Naive thymus-derived CD4-positive, alpha-beta T cell (primary cell): ENCODE measurements at regions of chr5 and their contacts with region 1.

Region 1: GRCh38 chr5:151213800-151214613 is 9.9 kb downstream of the CCDC69 start:
- DNase-seq: peak; percentile 53 to 85 (median 79)
- ATAC-seq: peak; percentile 90
- H3K4me3 ChIP-seq: peak overlapping the region; percentile 74
- H3K4me3 Mint-ChIP-seq: peak overlapping the region; percentile 80 to 93 (median 89)
- H3K27ac ChIP-seq: peak overlapping the region; percentile 93
- H3K27ac Mint-ChIP-seq: peak overlapping the region; percentile 90 to 98 (median 97)
- H3K4me1 ChIP-seq: peaks cover 80 to 82% of the 10 kb centered on the region in 2 donors
- H3K4me1 Mint-ChIP-seq: peaks cover 56 to 95% (median 84%) of the 10 kb centered on the region in 7 donors
- H3K27me3 ChIP-seq: no peaks in the 10 kb centered on the region
- H3K27me3 Mint-ChIP-seq: no peaks in the 10 kb centered on the region

Region 2: DNA sequence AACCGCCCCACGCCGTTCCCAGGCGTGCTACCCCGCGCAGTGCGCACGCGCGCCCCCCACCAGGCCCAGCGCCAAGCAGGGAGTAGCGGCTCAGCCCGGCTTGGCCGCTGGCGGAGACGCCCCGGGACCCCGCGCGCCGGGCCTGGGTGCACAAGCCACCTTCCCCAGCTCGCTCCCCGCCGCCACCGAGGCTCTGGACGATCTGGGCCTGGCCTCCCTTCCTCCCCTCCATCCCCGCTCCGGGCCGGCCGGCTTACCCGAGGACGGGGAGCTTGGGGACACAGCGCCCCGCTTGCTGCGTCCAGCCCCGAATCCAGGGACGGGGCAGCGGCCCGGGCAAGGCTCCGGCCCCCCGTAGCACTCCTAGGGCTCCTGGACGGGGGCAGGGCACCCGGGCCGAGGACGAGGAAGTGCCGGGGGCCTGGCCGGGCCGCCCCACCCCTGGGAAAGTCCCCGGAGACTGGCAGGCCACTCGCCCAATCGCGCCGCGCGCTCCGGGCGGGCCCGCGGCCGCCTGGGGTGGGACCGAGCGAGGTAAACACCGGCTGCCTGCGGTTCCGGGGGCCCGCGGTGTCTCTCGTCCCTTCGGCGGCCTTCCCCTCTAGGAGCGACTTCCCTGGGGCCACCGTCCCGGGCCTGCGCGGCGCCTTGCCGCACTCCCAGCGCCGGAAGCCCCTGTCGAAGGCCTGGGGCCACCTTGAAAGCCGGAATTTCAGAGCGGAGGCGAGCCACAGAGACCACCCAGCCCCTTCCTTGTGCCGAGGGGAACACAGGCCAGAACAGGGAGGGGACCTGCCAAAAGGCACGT is 133.2 kb before region 1 on chr5 and contains the start of gene TNIP1:
- CTCF ChIA-PET with region 1: no interaction called
- POLR2A ChIA-PET with region 1: interaction called, 5 read pairs
- intact Hi-C with region 1: loop called (anchors 2 kb)
- DNase-seq: peak; percentile 86 to 99 (median 90)
- ATAC-seq: peak; percentile 94
- H3K4me3 ChIP-seq: peak within 1 kb of the TSS; percentile 86
- H3K4me3 Mint-ChIP-seq: peak within 1 kb of the TSS; percentile 85 to 95 (median 90)
- H3K27ac ChIP-seq: peak within 1 kb of the TSS; percentile 96
- H3K27ac Mint-ChIP-seq: peak within 1 kb of the TSS; percentile 86 to 95 (median 91)
- H3K4me1 ChIP-seq: peaks cover 37 to 69% of the 10 kb centered on the region in 2 donors
- H3K4me1 Mint-ChIP-seq: peaks cover 53 to 84% (median 73%) of the 10 kb centered on the region in 7 donors
- H3K27me3 ChIP-seq: no peaks in the 10 kb centered on the region
- H3K27me3 Mint-ChIP-seq: no peaks in the 10 kb centered on the region
- total RNA-seq, gene TNIP1: 124 to 234 (median 131) TPM

Region 3: GRCh38 chr5:151150471-151151262 is 63.3 kb before region 1 on chr5:
- CTCF ChIA-PET with region 1: interaction called, 4 read pairs
- POLR2A ChIA-PET with region 1: interaction called, 4 read pairs
- intact Hi-C with region 1: loop called (anchors 1 to 2 kb)
- DNase-seq: peak; percentile 39 to 93 (median 83)
- ATAC-seq: peak; percentile 89
- H3K4me3 ChIP-seq: peak overlapping the region; percentile 44
- H3K4me3 Mint-ChIP-seq: peak overlapping the region; percentile 70 to 97 (median 86)
- H3K27ac ChIP-seq: peak overlapping the region; percentile 92
- H3K27ac Mint-ChIP-seq: peak overlapping the region; percentile 91 to 99 (median 97)
- H3K4me1 ChIP-seq: peaks cover 93 to 99% of the 10 kb centered on the region in 2 donors
- H3K4me1 Mint-ChIP-seq: peaks cover 80 to 100% (median 96%) of the 10 kb centered on the region in 7 donors
- H3K27me3 ChIP-seq: no peaks in the 10 kb centered on the region
- H3K27me3 Mint-ChIP-seq: no peaks in the 10 kb centered on the region

Region 4: DNA sequence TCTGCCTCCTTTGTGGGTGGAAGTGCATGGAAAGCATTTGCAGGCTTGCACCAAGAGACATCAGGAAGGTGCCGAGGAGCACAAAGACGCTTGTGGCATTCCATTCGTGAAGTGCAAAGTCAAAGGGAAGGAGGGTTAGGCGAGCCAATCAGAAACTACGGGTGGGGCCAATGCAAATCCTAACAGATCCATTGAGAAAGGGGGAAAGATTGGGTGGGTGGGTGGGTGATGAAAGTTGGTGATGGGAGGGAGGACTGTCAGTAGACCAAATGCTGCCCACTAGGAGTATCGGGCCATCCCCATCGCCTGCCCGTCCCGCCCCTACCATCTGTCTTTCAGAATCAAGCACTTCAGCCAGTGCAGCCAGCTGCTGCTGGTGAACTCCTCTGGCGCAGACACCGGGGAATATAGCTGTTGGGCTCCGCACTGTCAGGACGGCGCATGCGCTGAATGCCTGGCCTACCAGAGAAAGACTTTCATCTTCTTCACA is 39.4 kb before region 1 on chr5:
- CTCF ChIA-PET with region 1: no interaction called
- POLR2A ChIA-PET with region 1: interaction called, 6 read pairs
- intact Hi-C with region 1: loop called in 1 of 2 experiments (anchors 5 kb)
- DNase-seq: no peak
- ATAC-seq: no peak
- H3K4me3 ChIP-seq: no peak overlapping the region
- H3K4me3 Mint-ChIP-seq: no peak overlapping the region
- H3K27ac ChIP-seq: no peak overlapping the region
- H3K27ac Mint-ChIP-seq: peak overlapping the region in 7 of 9 donors; percentile 12 to 78 (median 55)
- H3K4me1 ChIP-seq: peaks cover 0 to 6% of the 10 kb centered on the region in 2 donors
- H3K4me1 Mint-ChIP-seq: peaks cover 11 to 52% (median 26%) of the 10 kb centered on the region in 7 donors
- H3K27me3 ChIP-seq: no peaks in the 10 kb centered on the region
- H3K27me3 Mint-ChIP-seq: no peaks in the 10 kb centered on the region

Region 5: DNA sequence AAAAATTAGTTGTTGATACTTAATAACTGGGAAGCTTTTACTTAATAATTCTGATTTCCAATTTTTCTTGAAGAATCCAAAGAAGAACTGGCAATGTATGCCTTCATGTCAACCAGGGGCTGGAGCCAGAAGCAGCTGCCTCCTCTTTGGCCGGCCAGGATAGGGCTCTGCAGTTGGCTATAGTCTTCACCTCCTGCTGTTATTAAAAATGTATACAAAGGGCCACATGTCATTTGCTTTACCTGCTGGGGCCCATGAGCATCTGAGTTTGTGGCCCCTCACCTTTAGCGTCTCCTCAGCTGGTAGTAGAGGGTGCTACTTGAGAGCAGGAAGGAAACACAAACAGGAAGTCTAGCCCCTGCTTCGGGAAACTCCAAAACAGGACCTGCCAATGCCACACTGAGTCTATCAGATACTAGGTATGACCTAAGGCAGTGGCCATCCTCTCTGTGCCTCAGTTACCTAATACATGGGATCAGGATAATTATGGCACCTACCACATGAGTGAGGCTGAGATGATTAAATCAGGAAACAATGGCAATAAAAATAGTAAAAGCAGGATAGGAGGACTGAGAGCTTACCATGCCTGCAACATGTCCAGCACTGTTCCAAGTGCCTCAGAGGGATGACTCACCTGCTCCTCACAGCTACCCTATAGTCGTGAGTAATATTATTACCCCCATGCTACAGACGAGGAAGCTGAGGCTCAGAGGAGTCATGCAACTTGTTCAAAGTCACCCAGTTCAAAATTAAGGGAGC is 11.4 kb before region 1 on chr5:
- CTCF ChIA-PET with region 1: interaction called, 3 read pairs
- POLR2A ChIA-PET with region 1: interaction called, 44 read pairs
- intact Hi-C with region 1: loop called (anchors 1 to 2 kb)
- DNase-seq: no peak
- ATAC-seq: peak; percentile 83
- H3K4me3 ChIP-seq: peak overlapping the region; percentile 12
- H3K4me3 Mint-ChIP-seq: peak overlapping the region in 9 of 10 donors; percentile 1 to 73 (median 55)
- H3K27ac ChIP-seq: peak overlapping the region; percentile 60
- H3K27ac Mint-ChIP-seq: peak overlapping the region; percentile 79 to 96 (median 87)
- H3K4me1 ChIP-seq: peaks cover 14 to 20% of the 10 kb centered on the region in 2 donors
- H3K4me1 Mint-ChIP-seq: peaks cover 22 to 60% (median 57%) of the 10 kb centered on the region in 7 donors
- H3K27me3 ChIP-seq: no peaks in the 10 kb centered on the region
- H3K27me3 Mint-ChIP-seq: no peaks in the 10 kb centered on the region

Region 6: DNA sequence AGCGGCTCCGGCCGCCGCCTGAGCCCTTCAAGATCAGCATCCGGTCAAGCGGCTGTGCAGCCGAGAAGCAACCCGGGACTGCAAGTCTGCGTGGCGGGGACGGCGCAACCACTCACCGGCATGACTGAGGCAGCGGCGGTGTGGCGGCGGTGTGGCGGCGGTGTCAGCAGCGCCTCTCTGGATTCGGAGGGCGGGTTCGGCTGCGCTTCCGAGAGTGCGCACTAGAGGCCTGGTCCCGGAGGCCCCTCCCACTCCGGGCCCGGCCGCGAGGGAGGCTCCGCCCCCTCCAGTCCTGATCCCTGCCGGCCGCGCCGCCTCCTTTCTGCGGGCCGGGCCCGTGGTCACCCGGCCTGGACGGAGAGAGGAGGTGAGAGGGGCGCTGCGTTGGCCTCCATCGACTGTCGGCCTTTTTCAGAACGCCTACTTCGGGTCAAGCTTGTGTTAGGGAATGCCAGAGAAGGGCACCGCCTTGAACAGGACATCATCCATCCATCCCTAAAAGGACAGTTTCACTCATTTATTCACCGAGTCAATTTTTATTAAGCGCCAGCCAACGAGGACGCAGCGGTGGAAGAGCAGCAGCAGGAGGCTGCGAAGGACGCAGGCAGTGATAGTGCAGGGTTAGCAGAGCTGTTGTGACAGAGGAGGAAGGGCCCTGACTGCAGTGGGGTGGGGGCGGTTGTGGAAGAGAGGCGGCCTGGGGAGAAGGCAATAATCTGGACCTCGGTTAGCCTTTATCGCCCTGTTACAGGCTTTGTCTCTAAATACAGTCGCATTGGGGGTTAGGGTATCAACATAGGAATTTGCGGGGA is 544.6 kb after region 1 on chr5 and contains the start of gene ATOX1:
- CTCF ChIA-PET with region 1: no interaction called
- POLR2A ChIA-PET with region 1: no interaction called
- intact Hi-C with region 1: loop called in 1 of 2 experiments (anchors 5 kb)
- DNase-seq: peak; percentile 85 to 93 (median 89)
- ATAC-seq: peak; percentile 100
- H3K4me3 ChIP-seq: peak within 1 kb of the TSS; percentile 94
- H3K4me3 Mint-ChIP-seq: peak within 1 kb of the TSS; percentile 88 to 99 (median 94)
- H3K27ac ChIP-seq: peak within 1 kb of the TSS; percentile 94
- H3K27ac Mint-ChIP-seq: peak within 1 kb of the TSS; percentile 88 to 98 (median 94)
- H3K4me1 ChIP-seq: peaks cover 14 to 20% of the 10 kb centered on the region in 2 donors
- H3K4me1 Mint-ChIP-seq: peaks cover 16 to 50% (median 39%) of the 10 kb centered on the region in 7 donors
- H3K27me3 ChIP-seq: no peaks in the 10 kb centered on the region
- H3K27me3 Mint-ChIP-seq: peaks cover 0 to 3% (median 0%) of the 10 kb centered on the region in 5 donors
- total RNA-seq, gene ATOX1: 14.8 to 58.2 (median 29.6) TPM